ENCODE measurements at regions of chr3 and their contacts with region 1.

Region 1: DNA sequence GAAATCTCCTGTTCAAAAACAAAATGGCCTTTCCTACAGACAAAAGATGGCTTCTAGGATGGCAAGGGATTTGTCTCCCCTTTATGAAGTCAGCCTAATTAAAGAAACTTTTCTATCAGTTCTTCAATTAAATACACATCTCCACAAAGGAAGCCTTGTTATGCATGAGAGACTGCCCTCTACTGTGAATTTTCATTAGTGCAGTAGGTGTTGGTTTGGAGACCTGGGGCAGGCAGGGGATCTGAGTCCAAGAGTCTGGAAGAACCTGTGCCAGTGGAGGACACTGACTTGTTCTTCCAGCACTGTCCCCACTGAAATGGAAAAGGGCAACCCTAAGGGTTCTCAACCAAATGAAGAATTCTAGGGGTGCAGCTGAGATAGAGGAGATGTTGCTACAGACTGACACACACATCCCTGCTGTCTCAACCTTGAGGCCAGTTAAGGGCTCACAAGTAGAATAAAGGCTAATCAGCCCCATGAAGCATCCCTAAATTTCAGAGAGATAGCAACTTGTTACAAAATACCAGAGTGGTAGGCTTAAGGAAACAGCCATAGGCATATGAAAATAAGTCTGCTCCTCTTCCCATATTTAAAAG is 174.0 kb upstream of the PRICKLE2 start:
- DNase-seq: no peak
- ATAC-seq: peak; percentile 77
- H3K4me3 ChIP-seq: no peak overlapping the region
- H3K27ac ChIP-seq: no peak overlapping the region
- H3K4me1 ChIP-seq: no peaks in the 10 kb centered on the region
- H3K27me3 ChIP-seq: no peaks in the 10 kb centered on the region
- CTCF ChIP-seq: peak; percentile 58 to 65 (median 60); a peak in 5 of 6 replicates
- EP300 ChIP-seq: no peak
- POLR2A ChIP-seq: no peak
- RAD21 ChIP-seq: peak; percentile 78

Region 2: DNA sequence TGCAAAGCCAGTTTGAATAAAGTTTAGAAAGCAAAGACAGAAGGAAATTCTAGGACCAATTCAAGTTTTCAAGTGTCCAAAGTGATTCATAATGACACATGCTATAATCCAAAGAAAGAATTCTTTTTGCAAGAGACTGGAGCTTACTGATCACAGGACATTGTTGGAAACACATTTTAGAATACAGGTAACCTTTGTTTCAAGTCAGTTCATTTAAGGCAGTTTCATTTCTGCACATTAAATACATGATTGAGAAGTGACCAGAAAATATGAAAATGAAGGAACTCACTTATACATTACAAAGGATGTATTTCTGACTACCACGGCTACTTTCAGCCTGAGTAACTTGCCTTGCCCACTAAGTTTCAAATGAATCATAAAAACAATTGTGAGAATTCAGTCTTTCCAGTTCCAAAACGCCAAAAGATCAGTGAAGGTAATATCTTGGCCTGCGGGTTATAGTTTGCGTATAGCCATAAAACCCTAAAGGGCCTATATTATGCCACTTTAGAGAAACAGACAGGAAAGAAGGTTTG is 222.8 kb before region 1 on chr3:
- CTCF ChIA-PET with region 1: no interaction called
- POLR2A ChIA-PET with region 1: no interaction called
- RAD21 ChIA-PET with region 1: no interaction called
- SMC1A ChIA-PET with region 1: interaction called, 3 read pairs
- in situ Hi-C with region 1: no loop called
- intact Hi-C with region 1: loop called (anchors 5 kb)
- DNase-seq: peak; percentile 33
- ATAC-seq: peak; percentile 85
- H3K4me3 ChIP-seq: no peak overlapping the region
- H3K27ac ChIP-seq: no peak overlapping the region
- H3K4me1 ChIP-seq: no peaks in the 10 kb centered on the region
- H3K27me3 ChIP-seq: no peaks in the 10 kb centered on the region
- CTCF ChIP-seq: no peak
- EP300 ChIP-seq: peak in 1 of 2 experiments; percentile 24; a peak in 1 of 4 replicates
- POLR2A ChIP-seq: no peak
- RAD21 ChIP-seq: no peak

Region 3: GRCh38 chr3:64355401-64355807 is 43.9 kb before region 1 on chr3:
- CTCF ChIA-PET with region 1: interaction called, 5 read pairs
- POLR2A ChIA-PET with region 1: interaction called, 5 read pairs
- RAD21 ChIA-PET with region 1: interaction called, 5 read pairs
- SMC1A ChIA-PET with region 1: interaction called, 32 read pairs
- in situ Hi-C with region 1: no loop called
- intact Hi-C with region 1: no loop called
- DNase-seq: no peak
- ATAC-seq: peak; percentile 48
- H3K4me3 ChIP-seq: no peak overlapping the region
- H3K27ac ChIP-seq: no peak overlapping the region
- H3K4me1 ChIP-seq: no peaks in the 10 kb centered on the region
- H3K27me3 ChIP-seq: no peaks in the 10 kb centered on the region; a peak in 1 of 4 replicates
- CTCF ChIP-seq: no peak
- EP300 ChIP-seq: no peak
- POLR2A ChIP-seq: no peak
- RAD21 ChIP-seq: no peak

Region 4: DNA sequence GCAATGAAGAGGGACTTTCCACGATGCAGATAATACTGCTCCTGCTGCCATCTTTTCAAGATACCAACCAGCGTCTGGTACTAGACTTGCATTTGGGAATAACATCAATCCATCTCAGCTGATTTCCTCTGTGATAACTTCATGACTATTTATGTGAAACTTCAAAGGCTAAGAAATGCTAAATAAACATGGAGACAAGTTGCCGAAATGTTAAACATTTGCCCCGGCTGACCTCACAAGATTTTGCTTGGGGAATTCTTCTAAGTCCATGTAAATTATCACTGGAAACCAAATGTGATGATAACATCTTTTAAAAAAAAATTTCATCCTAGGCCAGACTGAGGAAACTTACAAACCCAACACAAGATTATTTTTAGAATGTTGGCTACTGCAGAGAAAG is 11.8 kb after region 1 on chr3:
- CTCF ChIA-PET with region 1: interaction called, 14 read pairs
- POLR2A ChIA-PET with region 1: interaction called, 3 read pairs
- RAD21 ChIA-PET with region 1: interaction called, 6 read pairs
- SMC1A ChIA-PET with region 1: interaction called, 33 read pairs
- in situ Hi-C with region 1: no loop called
- intact Hi-C with region 1: no loop called
- DNase-seq: no peak
- ATAC-seq: no peak
- H3K4me3 ChIP-seq: no peak overlapping the region
- H3K27ac ChIP-seq: no peak overlapping the region
- H3K4me1 ChIP-seq: no peaks in the 10 kb centered on the region
- H3K27me3 ChIP-seq: no peaks in the 10 kb centered on the region
- CTCF ChIP-seq: no peak
- EP300 ChIP-seq: no peak
- POLR2A ChIP-seq: no peak
- RAD21 ChIP-seq: no peak

Region 5: GRCh38 chr3:64454179-64454578 is 54.9 kb after region 1 on chr3:
- CTCF ChIA-PET with region 1: interaction called, 9 read pairs
- POLR2A ChIA-PET with region 1: no interaction called
- RAD21 ChIA-PET with region 1: interaction called, 8 read pairs
- SMC1A ChIA-PET with region 1: interaction called, 13 read pairs
- in situ Hi-C with region 1: no loop called
- intact Hi-C with region 1: no loop called
- DNase-seq: no peak
- ATAC-seq: peak; percentile 23; the same call in 2 of the 3 replicates
- H3K4me3 ChIP-seq: no peak overlapping the region
- H3K27ac ChIP-seq: no peak overlapping the region
- H3K4me1 ChIP-seq: peaks cover 4% of the 10 kb centered on the region; the same call in 1 of the 2 replicates
- H3K27me3 ChIP-seq: no peaks in the 10 kb centered on the region
- CTCF ChIP-seq: no peak
- EP300 ChIP-seq: no peak
- POLR2A ChIP-seq: no peak
- RAD21 ChIP-seq: no peak

Measured in GM12878 (cell line).